Gastrocnemius medialis (tissue), 4 donors: ENCODE measurements at regions of chr2 and their contacts with region 1.

Region 1: GRCh38 chr2:30146438-30147147 is at the start of gene YPEL5:
- DNase-seq: peak; percentile 100
- ATAC-seq: peak; percentile 91 to 93
- H3K4me3 ChIP-seq: peak within 1 kb of the TSS; percentile 86 to 97 (median 92)
- H3K27ac ChIP-seq: peak within 1 kb of the TSS; percentile 94 to 100 (median 100)
- H3K4me1 ChIP-seq: peaks cover 34 to 40% of the 10 kb centered on the region in 2 donors
- H3K27me3 ChIP-seq: no peaks in the 10 kb centered on the region
- CTCF ChIP-seq: peak in 1 of 5 experiments; percentile 3
- POLR2A ChIP-seq: peak; percentile 96 to 98
- total RNA-seq, gene YPEL5: 31.4 to 76.7 (median 53.9) TPM

Region 2: DNA sequence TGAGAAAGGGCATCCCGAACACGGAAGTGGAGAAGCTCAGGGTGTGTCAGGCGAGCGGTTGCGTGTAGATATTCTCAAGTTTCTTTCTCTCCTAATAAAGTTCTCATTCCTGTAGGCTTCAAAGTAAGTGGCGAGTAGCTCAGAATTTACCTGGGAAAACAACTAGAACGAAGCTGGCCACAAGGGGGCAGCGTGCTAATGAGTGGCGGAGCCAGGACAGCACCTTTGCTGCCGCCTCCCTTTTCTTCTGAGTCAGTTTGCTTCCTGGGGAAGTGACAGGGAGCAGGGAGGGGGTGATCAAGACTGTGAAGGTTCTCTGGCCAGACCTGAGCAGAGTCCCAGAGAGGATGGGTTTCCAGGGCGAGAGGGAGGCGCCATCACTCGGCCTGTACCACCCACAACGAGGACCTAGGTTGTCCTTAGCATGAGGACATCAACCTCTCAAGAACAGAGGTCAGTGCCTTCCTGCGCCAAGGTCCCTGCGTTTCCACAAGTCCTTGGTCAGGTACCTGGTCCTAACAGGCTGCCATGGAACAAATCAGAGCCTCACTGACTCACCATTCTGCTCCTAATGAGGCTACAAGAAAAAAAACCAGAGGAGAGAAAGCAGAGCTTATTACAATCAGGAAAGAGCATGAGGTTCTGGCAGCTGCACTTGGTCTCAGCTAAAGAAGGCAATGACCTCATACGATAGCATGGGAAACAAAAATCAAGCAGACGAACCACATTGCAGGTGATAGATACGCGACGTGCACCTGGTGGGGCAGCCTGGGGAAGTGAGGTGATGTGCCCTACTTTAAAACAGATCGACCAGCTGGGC is 1552.1 kb before region 1 on chr2:
- in situ Hi-C with region 1: no loop called
- intact Hi-C with region 1: loop called (anchors 10 kb)
- DNase-seq: peak; percentile 87 to 93
- ATAC-seq: peak; percentile 90 to 93
- H3K4me3 ChIP-seq: peak overlapping the region; percentile 7 to 35 (median 19)
- H3K27ac ChIP-seq: peak overlapping the region; percentile 89 to 97 (median 92)
- H3K4me1 ChIP-seq: peaks cover 28 to 39% of the 10 kb centered on the region in 2 donors
- H3K27me3 ChIP-seq: no peaks in the 10 kb centered on the region
- CTCF ChIP-seq: peak; percentile 86 to 95 (median 90)
- POLR2A ChIP-seq: peak; percentile 42 to 65

Region 3: GRCh38 chr2:30178618-30179434 is 32.2 kb after region 1 on chr2:
- in situ Hi-C with region 1: no loop called
- intact Hi-C with region 1: loop called (anchors 2 kb)
- DNase-seq: peak; percentile 86 to 90
- ATAC-seq: peak; percentile 98 to 99
- H3K4me3 ChIP-seq: no peak overlapping the region
- H3K27ac ChIP-seq: peak overlapping the region; percentile 74 to 84 (median 80)
- H3K4me1 ChIP-seq: peaks cover 15 to 25% of the 10 kb centered on the region in 2 donors
- H3K27me3 ChIP-seq: peaks cover 0 to 6% (median 0%) of the 10 kb centered on the region in 3 donors
- CTCF ChIP-seq: no peak
- POLR2A ChIP-seq: peak; percentile 22 to 38